ENCODE measurements at regions of chr2 and their contacts with region 1.

Region 1: DNA sequence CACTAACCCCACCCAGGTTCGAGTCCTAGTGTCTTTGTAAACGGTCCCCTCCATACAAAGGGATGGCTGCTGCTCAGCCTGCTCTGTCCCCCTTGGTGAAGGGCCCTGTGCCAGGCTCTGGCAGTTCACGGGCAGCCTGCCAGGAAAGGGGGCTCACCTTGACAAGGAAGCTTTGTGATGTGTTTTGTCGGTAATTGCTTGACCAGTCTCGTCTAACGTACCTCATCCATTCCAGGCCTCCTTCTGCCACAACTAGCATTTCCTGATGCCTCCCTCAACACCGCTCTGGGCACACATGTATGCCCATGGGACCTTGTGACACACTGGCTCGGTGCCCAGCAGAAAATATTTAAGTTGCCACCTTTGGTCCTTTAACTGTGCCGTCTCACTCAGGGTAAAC is 171.9 kb downstream of the KLHL29 start:
- DNase-seq: peak; percentile 81
- H3K4me3 Mint-ChIP-seq: no peak overlapping the region
- H3K27ac Mint-ChIP-seq: peak overlapping the region; percentile 56
- H3K4me1 Mint-ChIP-seq: peaks cover 10% of the 10 kb centered on the region
- H3K27me3 Mint-ChIP-seq: no peaks in the 10 kb centered on the region
- CTCF ChIP-seq: no peak

Region 2: DNA sequence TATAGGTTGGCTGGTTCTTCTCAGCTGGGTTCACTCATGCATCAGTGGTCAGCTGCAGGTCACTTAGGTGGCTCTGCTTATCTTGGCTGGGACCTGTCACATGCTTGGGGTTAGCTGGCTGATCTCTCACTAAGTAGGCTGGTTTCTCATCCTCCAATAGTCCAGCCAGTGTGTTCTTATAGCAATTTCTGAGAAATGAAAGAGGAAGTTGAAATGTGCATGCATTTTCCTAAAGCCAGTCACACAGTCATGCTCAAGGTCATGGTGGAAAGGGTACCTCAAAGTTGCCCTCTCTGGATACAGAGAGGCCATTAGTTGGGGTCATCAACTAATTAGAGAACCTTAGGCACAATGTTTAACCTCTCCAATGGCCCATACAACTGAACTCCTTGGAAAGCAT is 107.5 kb before region 1 on chr2:
- CTCF ChIA-PET with region 1: no interaction called
- intact Hi-C with region 1: no loop called
- DNase-seq: no peak
- H3K4me3 Mint-ChIP-seq: no peak overlapping the region
- H3K27ac Mint-ChIP-seq: no peak overlapping the region
- H3K4me1 Mint-ChIP-seq: peaks cover 8% of the 10 kb centered on the region
- H3K27me3 Mint-ChIP-seq: no peaks in the 10 kb centered on the region
- CTCF ChIP-seq: no peak

Region 3: GRCh38 chr2:23497063-23497462 is 59.9 kb before region 1 on chr2:
- CTCF ChIA-PET with region 1: no interaction called
- intact Hi-C with region 1: no loop called
- DNase-seq: no peak
- H3K4me3 Mint-ChIP-seq: no peak overlapping the region
- H3K27ac Mint-ChIP-seq: no peak overlapping the region
- H3K4me1 Mint-ChIP-seq: no peaks in the 10 kb centered on the region
- H3K27me3 Mint-ChIP-seq: no peaks in the 10 kb centered on the region
- CTCF ChIP-seq: no peak

Region 4: GRCh38 chr2:23520256-23520655 is 36.7 kb before region 1 on chr2:
- CTCF ChIA-PET with region 1: no interaction called
- intact Hi-C with region 1: loop called (anchors 1 kb)
- DNase-seq: peak; percentile 48
- H3K4me3 Mint-ChIP-seq: no peak overlapping the region
- H3K27ac Mint-ChIP-seq: peak overlapping the region; percentile 60
- H3K4me1 Mint-ChIP-seq: peaks cover 39% of the 10 kb centered on the region
- H3K27me3 Mint-ChIP-seq: no peaks in the 10 kb centered on the region
- CTCF ChIP-seq: no peak